Right ventricle myocardium inferior (tissue), 1 donor: ENCODE measurements at regions of chr14 and their contacts with region 1.

Region 1: GRCh38 chr14:76710056-76711010 is 50.9 kb upstream of the VASH1 start:
- DNase-seq: no peak
- ATAC-seq: peak; percentile 63

Region 2: GRCh38 chr14:76603713-76604112 is 106.6 kb before region 1 on chr14:
- intact Hi-C with region 1: no loop called
- DNase-seq: no peak
- ATAC-seq: peak; percentile 94

Region 3: GRCh38 chr14:76615331-76615730 is 95.0 kb before region 1 on chr14:
- intact Hi-C with region 1: no loop called
- DNase-seq: no peak
- ATAC-seq: no peak

Region 4: DNA sequence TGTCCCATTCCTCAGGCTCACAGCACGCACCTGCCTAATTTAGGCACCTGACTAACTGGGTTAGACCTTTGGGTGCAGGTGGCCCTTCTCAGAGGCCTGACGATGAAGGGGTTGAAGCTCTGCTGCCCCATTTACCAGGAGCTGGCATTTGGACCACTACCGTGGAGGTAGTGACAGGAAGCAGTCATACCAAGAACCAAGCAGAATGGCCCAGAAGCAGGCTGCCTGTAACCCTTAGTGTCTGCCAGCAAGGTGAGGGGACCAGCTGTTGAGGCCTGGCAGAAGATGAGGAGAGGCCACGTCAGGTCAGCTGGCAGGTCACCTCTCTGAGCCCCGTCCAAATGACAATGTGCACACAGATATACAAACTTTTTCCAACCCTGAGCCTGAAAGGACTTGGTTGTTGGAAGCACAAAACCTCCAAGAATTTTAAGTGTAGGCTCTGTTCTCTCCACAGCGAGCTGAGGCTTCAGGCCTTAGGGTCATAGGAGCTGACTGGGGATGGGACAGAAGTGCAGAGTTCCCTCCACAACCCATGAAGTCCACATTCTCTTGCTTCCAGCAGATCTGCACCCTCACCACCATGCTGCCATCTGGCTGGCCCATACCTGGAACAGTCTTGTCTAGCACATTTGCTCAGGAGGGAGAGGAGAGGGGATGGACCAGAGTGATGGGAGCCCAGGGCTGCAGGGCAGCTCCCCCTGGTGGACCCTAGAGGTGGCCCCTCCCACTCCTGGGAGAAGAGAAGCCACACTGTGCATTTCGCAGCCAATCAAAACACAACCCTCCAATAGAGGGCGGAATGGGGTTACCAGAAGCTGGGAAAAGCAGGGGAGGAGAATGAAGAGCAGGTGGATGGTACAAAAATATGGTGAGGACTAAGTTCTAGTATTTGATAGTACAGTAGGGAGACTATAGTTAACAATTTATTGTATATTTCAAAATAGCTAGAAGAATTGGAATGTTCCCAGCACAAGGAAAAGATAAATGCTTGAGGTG is 74.2 kb after region 1 on chr14:
- intact Hi-C with region 1: loop called (anchors 1 kb)
- DNase-seq: no peak
- ATAC-seq: peak; percentile 89